Endothelial cell of umbilical vein (primary cell): ENCODE measurements at regions of chr22 and their contacts with region 1.

Region 1: GRCh38 chr22:46013460-46014416 is 36.8 kb upstream of the WNT7B start:
- DNase-seq: peak; percentile 88
- H3K4me3 ChIP-seq: peak overlapping the region; percentile 46 to 66 (median 50)
- H3K27ac ChIP-seq: peak overlapping the region; percentile 87
- H3K4me1 ChIP-seq: peaks cover 8% of the 10 kb centered on the region
- H3K27me3 ChIP-seq: no peaks in the 10 kb centered on the region
- CTCF ChIP-seq: peak; percentile 77 to 86
- POLR2A ChIP-seq: peak; percentile 78

Region 2: GRCh38 chr22:46027192-46028105 is 13.7 kb after region 1 on chr22:
- CTCF ChIA-PET with region 1: interaction called, 11 read pairs
- POLR2A ChIA-PET with region 1: interaction called, 5 read pairs
- dilution Hi-C with region 1: no loop called
- intact Hi-C with region 1: no loop called
- DNase-seq: no peak
- H3K4me3 ChIP-seq: peak overlapping the region in 2 of 3 experiments; percentile 20 to 37
- H3K27ac ChIP-seq: no peak overlapping the region
- H3K4me1 ChIP-seq: peaks cover 3% of the 10 kb centered on the region
- H3K27me3 ChIP-seq: peaks cover 0 to 3% of the 10 kb centered on the region in 2 experiments
- CTCF ChIP-seq: no peak
- POLR2A ChIP-seq: no peak

Region 3: DNA sequence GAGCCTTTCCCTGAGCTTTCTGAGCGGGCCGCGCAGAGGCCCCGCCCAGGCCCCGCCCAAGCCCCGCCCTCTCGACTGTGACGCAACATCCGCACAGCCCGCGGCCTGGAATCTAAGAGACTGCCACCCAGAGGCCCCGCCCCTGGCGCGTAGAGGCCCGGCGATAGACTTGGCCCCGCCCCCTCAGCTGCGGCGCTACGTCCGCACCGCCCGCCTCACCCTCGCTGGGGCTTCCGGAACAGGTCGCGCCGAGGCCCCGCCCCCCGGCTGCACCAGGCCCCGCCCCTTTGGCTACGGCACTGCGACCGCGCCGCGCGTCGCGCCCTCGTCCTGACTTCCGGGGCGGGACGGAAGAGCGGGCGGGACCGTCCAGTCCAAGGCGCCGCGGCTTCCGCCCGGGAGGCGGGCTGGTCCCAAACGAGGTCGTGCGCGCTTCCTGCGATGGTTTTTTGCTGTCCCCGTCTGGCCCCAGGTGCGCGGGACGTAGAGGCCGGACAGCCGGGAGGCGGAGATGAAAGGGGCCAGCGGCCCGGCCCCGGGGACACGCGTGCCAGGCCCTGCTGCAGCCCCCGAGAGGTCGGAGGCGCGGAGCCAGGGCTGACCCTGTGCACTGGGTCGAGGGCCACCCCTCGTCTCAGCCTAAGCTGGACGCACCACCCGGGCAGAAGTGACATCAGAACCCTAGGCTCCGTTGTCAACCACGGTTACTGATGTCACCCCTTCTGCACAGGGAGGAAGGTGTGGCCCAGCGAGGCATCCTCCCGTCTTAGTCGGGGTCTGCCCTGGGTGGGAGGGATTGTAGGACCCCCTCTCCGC is 22.2 kb after region 1 on chr22:
- CTCF ChIA-PET with region 1: interaction called, 13 read pairs
- POLR2A ChIA-PET with region 1: no interaction called
- dilution Hi-C with region 1: no loop called
- intact Hi-C with region 1: loop called (anchors 1 kb)
- DNase-seq: peak; percentile 100
- H3K4me3 ChIP-seq: peak overlapping the region; percentile 18 to 68 (median 26)
- H3K27ac ChIP-seq: peak overlapping the region; percentile 89
- H3K4me1 ChIP-seq: peaks cover 17% of the 10 kb centered on the region
- H3K27me3 ChIP-seq: no peaks in the 10 kb centered on the region
- CTCF ChIP-seq: no peak
- POLR2A ChIP-seq: peak; percentile 57

Region 4: GRCh38 chr22:46087336-46088277 is 73.9 kb after region 1 on chr22:
- CTCF ChIA-PET with region 1: interaction called, 13 read pairs
- POLR2A ChIA-PET with region 1: no interaction called
- dilution Hi-C with region 1: no loop called
- intact Hi-C with region 1: no loop called
- DNase-seq: peak; percentile 85
- H3K4me3 ChIP-seq: no peak overlapping the region
- H3K27ac ChIP-seq: peak overlapping the region; percentile 85
- H3K4me1 ChIP-seq: peaks cover 69% of the 10 kb centered on the region
- H3K27me3 ChIP-seq: no peaks in the 10 kb centered on the region
- CTCF ChIP-seq: no peak
- POLR2A ChIP-seq: no peak

Region 5: DNA sequence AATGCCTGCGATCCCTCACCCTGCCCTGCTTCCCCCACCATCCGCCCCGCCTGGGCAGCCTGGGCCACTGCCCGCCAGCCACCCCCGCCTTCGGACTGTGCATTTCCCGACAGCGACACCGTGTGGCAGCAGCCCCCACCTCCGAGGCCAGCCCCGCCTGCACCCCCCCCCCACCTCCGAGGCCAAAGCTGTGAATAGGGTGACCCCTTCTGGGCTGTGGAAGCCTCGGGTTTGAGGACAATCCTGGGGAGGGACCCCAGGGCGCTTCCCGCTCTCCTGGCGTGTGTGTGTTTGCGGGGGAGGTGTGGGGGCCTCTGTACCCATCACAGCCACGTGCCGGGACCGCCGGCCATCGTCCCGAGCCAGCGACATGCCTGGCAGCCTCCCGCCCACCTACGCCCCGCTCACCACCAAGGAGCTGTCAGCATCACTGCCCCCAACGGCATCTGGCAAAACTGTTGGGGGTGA is 102.8 kb after region 1 on chr22:
- CTCF ChIA-PET with region 1: interaction called, 241 read pairs
- POLR2A ChIA-PET with region 1: no interaction called
- dilution Hi-C with region 1: no loop called
- intact Hi-C with region 1: loop called (anchors 1 kb)
- DNase-seq: peak; percentile 85
- H3K4me3 ChIP-seq: no peak overlapping the region
- H3K27ac ChIP-seq: no peak overlapping the region
- H3K4me1 ChIP-seq: no peaks in the 10 kb centered on the region
- H3K27me3 ChIP-seq: no peaks in the 10 kb centered on the region
- CTCF ChIP-seq: peak; percentile 81 to 95
- POLR2A ChIP-seq: no peak